Sigmoid colon (tissue), 7 donors: ENCODE measurements at regions of chr4 and their contacts with region 1.

Region 1: DNA sequence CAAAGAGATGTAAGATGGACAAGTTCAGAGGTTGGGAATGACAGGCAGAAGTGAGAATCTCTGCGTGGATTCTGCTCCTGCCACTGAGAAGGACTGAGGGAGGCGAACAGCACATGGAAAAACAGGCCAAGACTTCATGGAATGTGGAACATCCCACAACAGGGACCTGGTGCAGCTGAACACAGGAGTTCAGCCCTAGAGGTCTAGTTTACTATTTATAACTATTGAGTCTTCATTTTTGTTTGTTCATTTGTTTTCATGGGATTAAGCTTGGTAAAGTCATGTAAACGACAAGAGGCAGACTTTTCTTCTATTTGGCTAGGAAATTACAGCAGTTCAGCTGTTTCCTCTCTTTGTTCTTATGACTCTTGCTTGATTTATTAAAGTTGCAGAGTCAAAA is 234.5 kb downstream of the MAML3 start:
- DNase-seq: no peak
- H3K4me3 ChIP-seq: no peak overlapping the region
- H3K27ac ChIP-seq: peak overlapping the region; percentile 77 to 90 (median 81)
- H3K4me1 ChIP-seq: peaks cover 0 to 77% (median 75%) of the 10 kb centered on the region in 4 donors
- H3K27me3 ChIP-seq: no peaks in the 10 kb centered on the region
- CTCF ChIP-seq: no peak
- EP300 ChIP-seq: no peak
- POLR2A ChIP-seq: no peak

Region 2: GRCh38 chr4:139988863-139989733 is 69.6 kb after region 1 on chr4:
- intact Hi-C with region 1: loop called (anchors 5 kb)
- DNase-seq: peak; percentile 74
- H3K4me3 ChIP-seq: peak overlapping the region in 1 of 4 donors; percentile 1
- H3K27ac ChIP-seq: peak overlapping the region; percentile 62 to 81 (median 76)
- H3K4me1 ChIP-seq: peaks cover 0 to 28% (median 20%) of the 10 kb centered on the region in 4 donors
- H3K27me3 ChIP-seq: no peaks in the 10 kb centered on the region
- CTCF ChIP-seq: no peak
- EP300 ChIP-seq: no peak
- POLR2A ChIP-seq: no peak

Region 3: DNA sequence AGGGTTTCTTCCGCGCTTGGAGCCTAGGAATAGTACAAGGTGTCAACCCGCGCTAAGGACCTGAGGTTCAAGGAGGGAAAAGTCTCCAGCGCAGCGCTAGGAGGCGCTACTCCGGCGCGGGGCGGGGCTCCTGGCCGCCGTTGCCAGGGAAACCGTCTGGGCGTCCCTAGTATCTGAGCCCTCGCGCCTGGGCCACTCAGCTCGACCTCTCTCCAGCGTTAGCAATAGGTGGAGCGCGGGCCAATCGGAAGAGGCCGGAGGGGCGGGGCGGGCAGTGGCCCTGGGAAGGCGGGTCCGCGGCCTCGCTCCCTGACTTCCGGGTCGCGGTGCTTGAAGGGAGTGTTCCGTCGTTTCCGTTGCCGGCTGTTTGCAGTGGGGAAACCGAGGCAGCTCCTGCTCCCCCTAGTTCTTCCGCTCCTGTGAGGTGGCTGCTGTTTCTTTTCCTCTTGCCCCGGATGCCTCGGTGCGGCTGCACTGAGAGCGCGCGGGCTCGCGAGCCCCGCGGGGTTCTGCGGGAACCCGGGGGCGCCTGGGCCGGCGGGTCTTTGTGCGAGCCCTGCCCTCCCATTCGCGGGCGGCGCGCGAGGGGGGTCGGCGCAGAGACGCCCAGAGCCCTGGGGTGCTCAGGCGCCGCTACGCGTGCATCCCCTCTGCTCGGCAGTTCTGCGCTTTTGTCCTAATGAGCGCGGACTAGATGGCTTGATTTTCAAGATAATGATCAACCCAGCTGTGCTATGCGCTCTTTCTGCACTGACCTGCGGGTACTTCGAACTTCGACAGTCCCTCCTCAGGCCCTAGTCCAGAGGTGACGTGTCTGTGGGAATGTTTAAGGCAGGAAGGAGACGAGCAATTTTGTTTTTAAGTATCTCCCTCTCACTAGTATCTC is 604.6 kb after region 1 on chr4 and contains the start of gene ELMOD2:
- intact Hi-C with region 1: no loop called
- DNase-seq: peak; percentile 99
- H3K4me3 ChIP-seq: peak within 1 kb of the TSS; percentile 84 to 95 (median 89)
- H3K27ac ChIP-seq: peak within 1 kb of the TSS; percentile 88 to 92 (median 90)
- H3K4me1 ChIP-seq: peaks cover 0 to 16% (median 13%) of the 10 kb centered on the region in 4 donors
- H3K27me3 ChIP-seq: no peaks in the 10 kb centered on the region
- CTCF ChIP-seq: peak; percentile 73 to 82 (median 78)
- EP300 ChIP-seq: no peak
- POLR2A ChIP-seq: no peak
- total RNA-seq, gene ELMOD2: 11.8 to 20.7 (median 19.6) TPM

Region 4: DNA sequence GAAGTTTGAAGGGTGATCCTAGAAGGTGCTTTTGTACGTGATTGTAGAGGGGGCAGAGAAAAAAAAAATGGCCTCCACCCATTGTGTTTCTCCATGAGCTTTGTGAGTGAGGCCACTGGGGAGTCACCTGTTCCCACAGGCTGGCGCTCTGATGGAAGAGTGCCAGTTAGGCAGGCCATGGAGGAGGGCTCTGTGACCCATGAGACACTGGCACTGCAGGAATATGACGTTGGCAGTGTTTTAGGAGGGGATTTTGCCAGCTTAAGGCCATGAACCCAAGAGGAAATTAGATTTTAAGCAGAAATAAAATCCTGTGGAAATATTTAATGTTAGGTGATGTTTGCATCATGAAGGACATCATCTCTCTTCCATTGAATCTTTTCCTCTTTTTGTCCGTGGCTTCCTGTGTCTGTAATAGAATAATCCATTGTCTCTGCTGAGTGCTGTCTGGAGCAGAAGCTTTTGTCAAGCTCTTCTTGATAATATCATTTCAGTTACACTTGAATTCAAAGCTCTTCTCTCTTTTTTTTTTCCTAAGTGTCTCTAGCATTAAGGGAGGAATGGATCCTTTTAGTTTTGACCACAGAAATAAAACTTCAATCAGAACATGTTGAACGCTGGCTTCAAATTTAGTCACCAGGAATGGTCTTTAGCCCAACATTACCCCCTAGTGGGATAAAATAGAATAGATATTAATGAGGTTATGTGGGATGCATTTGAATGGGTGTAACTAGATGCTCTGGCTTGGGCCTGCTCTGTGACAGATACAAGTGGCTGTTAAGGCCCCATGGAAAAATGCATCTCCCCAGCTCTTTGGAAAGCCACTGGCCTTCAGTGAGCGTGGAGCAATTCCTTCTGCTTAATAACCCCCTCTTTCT is 690.3 kb after region 1 on chr4:
- intact Hi-C with region 1: no loop called
- DNase-seq: no peak
- H3K4me3 ChIP-seq: no peak overlapping the region
- H3K27ac ChIP-seq: no peak overlapping the region
- H3K4me1 ChIP-seq: no peaks in the 10 kb centered on the region
- H3K27me3 ChIP-seq: no peaks in the 10 kb centered on the region
- CTCF ChIP-seq: peak in 3 of 4 experiments; percentile 9 to 46 (median 17)
- EP300 ChIP-seq: no peak
- POLR2A ChIP-seq: no peak